ENCODE measurements at regions of chr13 and their contacts with region 1.

Region 1: GRCh38 chr13:33441015-33441414 is 155.5 kb upstream of the STARD13 start:
- DNase-seq: peak in 1 of 2 experiments; percentile 7
- H3K4me3 ChIP-seq: no peak overlapping the region
- H3K27ac ChIP-seq: no peak overlapping the region
- H3K4me1 ChIP-seq: peaks cover 22% of the 10 kb centered on the region
- H3K27me3 ChIP-seq: no peaks in the 10 kb centered on the region
- CTCF ChIP-seq: peak; percentile 55; the same call in 1 of the 2 replicates

Region 2: GRCh38 chr13:33466262-33466661 is 25.2 kb after region 1 on chr13:
- CTCF ChIA-PET with region 1: interaction called, 14 read pairs
- POLR2A ChIA-PET with region 1: no interaction called
- intact Hi-C with region 1: no loop called
- DNase-seq: no peak
- H3K4me3 ChIP-seq: no peak overlapping the region
- H3K27ac ChIP-seq: no peak overlapping the region
- H3K4me1 ChIP-seq: no peaks in the 10 kb centered on the region
- H3K27me3 ChIP-seq: no peaks in the 10 kb centered on the region
- CTCF ChIP-seq: no peak

Measured in PC-9 (cell line).